ENCODE measurements at regions of chr11 and their contacts with region 1.

Region 1: GRCh38 chr11:33857933-33858371 is 33.9 kb downstream of the LMO2 start:
- H3K4me3 ChIP-seq: no peak overlapping the region
- H3K27ac ChIP-seq: no peak overlapping the region
- H3K4me1 ChIP-seq: no peaks in the 10 kb centered on the region
- CTCF ChIP-seq: peak; percentile 58; the same call in 1 of the 2 replicates

Region 2: DNA sequence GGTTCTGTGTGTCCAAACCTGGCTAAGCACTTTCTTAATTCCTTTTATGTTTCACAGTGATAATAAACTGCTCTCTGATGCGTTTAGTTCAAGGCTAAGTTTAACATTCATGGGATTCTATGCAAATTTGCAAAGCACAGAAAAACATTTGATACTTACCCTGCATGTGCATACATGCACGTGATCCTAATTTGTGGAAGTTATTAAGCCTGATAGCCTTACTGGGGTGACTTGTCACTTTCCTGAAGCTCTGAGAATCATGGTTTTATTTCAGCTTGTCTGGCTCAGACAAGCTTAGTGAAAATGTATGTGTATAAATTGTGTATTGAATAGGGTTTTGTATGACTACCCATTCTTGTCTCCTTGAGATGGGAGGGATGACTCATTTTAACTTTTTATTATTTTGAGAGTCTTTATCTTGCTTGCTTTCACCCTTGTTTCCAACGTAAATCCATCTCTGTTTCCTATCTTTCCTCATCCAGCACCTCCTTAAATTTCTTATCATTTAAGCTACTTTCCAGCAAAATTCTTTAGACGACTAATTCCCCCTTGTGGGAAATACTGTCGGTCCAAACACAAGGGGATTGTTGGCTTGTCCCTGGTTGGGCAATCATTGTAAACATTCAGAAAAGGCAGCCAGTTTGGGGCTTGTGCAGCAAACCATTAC is 324.4 kb before region 1 on chr11:
- CTCF ChIA-PET with region 1: no interaction called
- POLR2A ChIA-PET with region 1: no interaction called
- H3K4me3 ChIP-seq: no peak overlapping the region
- H3K27ac ChIP-seq: no peak overlapping the region
- H3K4me1 ChIP-seq: no peaks in the 10 kb centered on the region
- CTCF ChIP-seq: no peak

Region 3: DNA sequence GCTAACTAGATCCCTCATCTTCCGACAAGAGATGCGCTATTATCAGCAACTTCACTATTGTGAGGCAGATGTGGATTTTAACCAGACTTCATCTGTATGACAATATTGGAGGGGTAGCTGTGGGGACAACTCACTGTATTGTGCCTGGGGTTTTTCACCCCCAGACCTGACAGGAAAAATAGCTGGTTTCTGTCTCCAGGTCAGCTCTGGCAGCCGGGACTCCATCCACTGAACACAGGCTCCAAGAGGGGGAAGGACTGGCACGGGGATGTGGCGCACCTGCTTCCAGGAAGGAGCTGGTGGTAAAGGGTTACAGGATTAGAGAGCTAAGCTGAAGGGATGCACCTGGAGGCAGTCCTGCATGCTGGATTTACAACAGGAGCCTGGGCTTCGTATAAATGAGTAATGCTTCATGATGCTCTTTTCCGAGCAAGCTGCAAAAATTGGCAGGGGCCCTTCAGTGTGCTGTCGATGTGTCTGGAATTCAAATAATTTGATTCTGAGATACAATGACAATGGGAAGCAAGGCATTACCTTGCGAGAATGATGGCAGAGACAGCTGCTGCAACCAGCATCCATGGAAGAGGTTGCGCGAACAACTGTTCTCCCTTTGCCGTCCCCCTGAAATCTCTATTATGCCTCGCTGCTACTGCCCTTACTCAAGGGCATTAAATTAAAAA is 15.6 kb before region 1 on chr11:
- CTCF ChIA-PET with region 1: interaction called, 11 read pairs
- POLR2A ChIA-PET with region 1: no interaction called
- H3K4me3 ChIP-seq: no peak overlapping the region
- H3K27ac ChIP-seq: no peak overlapping the region
- H3K4me1 ChIP-seq: no peaks in the 10 kb centered on the region
- CTCF ChIP-seq: no peak

Region 4: DNA sequence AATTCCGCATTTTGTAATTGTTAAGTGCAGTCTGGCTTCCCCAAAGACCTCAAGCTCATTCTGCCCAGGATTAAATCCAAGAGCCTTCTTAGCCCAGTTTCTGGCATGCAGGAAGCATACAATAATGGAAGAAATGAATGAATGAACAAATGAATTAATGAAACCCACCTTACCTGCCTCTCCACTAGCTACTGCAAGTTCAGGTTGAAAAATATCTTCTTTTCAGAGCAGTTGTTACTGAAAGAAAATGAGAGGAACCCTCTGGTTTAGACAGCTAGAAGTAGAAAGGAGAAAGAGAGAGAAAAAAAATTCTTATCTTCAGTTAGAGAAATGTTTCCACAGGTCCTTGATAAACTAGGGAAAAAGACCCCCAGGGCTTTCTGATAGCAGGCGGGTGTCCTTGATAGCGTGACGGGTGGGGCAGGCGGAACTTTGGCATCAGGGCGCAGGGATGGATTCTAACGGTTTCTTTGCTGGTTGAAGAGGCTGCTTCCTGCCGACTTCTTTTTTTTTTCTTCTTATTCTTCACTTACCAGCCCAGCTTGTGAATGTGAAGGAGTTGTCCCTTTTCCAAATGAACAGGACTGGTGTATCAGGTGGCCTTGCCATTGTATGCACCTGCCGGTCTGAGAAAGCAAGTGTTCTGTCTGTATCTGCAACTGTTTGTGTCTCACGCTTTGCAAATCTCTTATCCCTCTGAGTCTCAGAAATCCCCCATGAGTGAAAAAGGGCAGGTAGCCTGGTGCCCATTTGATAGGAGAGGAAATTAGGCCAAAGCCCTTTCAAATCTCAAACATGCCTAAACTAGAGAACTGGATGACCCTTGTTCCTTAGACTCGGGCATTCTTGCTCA is 23.9 kb after region 1 on chr11:
- CTCF ChIA-PET with region 1: interaction called, 21 read pairs
- POLR2A ChIA-PET with region 1: no interaction called
- H3K4me3 ChIP-seq: no peak overlapping the region
- H3K27ac ChIP-seq: no peak overlapping the region
- H3K4me1 ChIP-seq: no peaks in the 10 kb centered on the region
- CTCF ChIP-seq: no peak

Region 5: GRCh38 chr11:33965032-33965431 is 107.1 kb after region 1 on chr11:
- CTCF ChIA-PET with region 1: interaction called, 55 read pairs
- POLR2A ChIA-PET with region 1: no interaction called
- H3K4me3 ChIP-seq: no peak overlapping the region
- H3K27ac ChIP-seq: no peak overlapping the region
- H3K4me1 ChIP-seq: no peaks in the 10 kb centered on the region
- CTCF ChIP-seq: no peak

Region 6: GRCh38 chr11:33976495-33977199 is 118.7 kb after region 1 on chr11:
- CTCF ChIA-PET with region 1: interaction called, 55 read pairs
- POLR2A ChIA-PET with region 1: no interaction called
- H3K4me3 ChIP-seq: no peak overlapping the region
- H3K27ac ChIP-seq: no peak overlapping the region
- H3K4me1 ChIP-seq: no peaks in the 10 kb centered on the region
- CTCF ChIP-seq: no peak

Region 7: DNA sequence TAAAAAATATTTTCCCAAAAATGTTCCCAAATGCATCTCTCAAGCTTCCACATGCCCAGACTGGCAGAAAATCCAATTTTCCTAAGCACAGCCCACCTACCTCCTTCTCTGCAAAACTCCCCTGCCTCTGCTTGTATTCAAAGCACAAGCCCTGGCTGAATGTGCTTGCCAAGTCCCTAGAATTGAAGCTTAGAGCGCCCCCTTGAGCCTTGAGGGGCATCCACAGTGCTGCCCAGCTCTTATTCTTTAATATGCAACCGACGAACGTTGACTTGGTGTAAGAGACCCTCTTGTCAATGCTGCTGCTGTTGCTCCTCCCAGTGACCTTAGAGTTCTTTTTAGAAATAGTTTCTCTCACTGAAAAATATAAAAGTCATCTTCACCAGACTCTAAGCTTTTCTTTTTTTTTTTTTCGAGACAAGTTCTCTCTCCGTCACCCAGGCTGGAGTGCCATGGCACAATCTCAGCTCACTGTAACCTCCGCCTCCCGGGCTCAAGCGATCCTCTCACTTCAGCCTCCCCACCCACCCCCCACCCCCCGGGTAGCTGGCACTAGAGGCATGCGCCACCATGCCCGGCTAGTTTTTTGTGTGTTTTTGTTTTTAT is 130.1 kb after region 1 on chr11:
- CTCF ChIA-PET with region 1: interaction called, 40 read pairs
- POLR2A ChIA-PET with region 1: no interaction called
- H3K4me3 ChIP-seq: no peak overlapping the region
- H3K27ac ChIP-seq: no peak overlapping the region
- H3K4me1 ChIP-seq: no peaks in the 10 kb centered on the region
- CTCF ChIP-seq: no peak